ENCODE measurements at regions of chr13 and their contacts with region 1.

Region 1: DNA sequence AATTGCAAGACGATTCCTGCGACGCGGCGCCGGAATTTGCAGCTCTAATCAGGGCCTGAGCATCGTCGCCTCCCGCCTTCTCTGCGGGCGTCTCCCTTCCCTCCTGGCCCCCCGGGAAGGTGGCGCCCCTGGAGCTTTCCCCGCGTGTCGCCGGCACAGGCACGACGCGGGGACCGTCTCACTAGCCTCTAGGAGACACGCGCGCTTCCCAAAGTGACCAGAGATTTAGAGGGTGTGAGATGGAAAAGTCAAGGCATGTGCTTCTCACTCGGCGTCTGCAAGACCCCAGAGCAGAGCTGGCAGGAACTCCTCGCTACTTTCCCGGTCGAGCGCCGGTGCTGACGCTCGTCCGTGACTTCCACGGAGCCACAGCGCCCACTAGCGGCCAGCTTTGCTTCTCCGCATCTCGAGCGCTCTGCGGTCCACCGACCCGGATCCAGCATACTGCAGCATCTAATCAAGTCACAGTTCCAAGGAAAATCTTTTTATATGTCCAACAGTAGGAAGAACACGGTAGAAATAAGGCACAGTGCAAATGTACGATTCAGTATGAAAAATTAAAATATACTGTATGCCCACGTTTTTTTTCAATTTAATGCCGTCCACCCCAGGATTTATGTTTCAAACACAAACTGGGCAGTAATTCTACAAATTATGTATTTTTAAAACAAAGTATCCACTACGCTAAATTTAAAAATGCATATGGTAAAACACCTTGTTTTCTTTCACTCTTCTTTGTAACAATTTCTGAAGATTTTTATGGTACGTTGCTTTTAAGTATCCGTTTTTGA is 977 bp upstream of the EFNB2 start:
- DNase-seq: peak; percentile 94

Region 2: DNA sequence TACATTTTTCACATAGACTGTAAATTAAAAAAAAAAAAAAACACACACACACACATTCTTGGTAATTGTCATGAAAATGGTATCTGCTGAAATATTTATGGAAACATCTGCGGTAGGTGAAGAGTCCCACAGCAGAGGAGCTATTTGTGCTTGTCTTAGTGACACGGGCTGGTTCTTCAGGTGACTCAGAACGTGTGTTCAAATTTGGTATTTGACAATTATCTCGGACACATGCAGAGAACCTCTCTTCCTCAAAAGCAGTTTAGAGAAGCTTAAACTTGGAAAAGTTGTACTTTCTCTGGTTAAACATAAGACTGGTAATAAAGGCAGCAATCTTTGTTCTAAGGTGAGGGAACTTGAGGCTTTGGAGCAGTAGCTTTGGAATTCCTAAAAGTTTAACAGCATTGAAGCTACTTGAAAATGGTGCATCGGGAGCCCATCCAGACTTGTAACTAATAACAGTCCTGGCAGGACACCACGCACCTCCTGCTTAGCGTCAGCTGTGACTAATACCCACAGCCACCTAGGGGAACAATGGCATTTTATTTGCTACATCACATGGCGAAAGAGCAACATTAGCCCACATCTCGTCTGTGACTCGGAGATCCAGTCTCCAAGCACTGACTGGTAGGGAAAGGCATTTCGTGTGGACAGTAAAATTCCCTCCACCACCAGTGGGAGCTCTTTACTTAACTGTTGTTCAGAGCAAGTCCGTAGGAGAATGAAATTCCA is 1965.1 kb before region 1 on chr13:
- intact Hi-C with region 1: loop called (anchors 5 kb)
- DNase-seq: no peak

Region 3: GRCh38 chr13:104785952-104786351 is 1750.5 kb before region 1 on chr13:
- intact Hi-C with region 1: loop called (anchors 10 kb)
- DNase-seq: no peak

Region 4: GRCh38 chr13:106083620-106084350 is 452.7 kb before region 1 on chr13:
- intact Hi-C with region 1: loop called (anchors 5 kb)
- DNase-seq: no peak

Region 5: GRCh38 chr13:106337096-106337850 is 199.2 kb before region 1 on chr13:
- intact Hi-C with region 1: no loop called
- DNase-seq: no peak

Region 6: DNA sequence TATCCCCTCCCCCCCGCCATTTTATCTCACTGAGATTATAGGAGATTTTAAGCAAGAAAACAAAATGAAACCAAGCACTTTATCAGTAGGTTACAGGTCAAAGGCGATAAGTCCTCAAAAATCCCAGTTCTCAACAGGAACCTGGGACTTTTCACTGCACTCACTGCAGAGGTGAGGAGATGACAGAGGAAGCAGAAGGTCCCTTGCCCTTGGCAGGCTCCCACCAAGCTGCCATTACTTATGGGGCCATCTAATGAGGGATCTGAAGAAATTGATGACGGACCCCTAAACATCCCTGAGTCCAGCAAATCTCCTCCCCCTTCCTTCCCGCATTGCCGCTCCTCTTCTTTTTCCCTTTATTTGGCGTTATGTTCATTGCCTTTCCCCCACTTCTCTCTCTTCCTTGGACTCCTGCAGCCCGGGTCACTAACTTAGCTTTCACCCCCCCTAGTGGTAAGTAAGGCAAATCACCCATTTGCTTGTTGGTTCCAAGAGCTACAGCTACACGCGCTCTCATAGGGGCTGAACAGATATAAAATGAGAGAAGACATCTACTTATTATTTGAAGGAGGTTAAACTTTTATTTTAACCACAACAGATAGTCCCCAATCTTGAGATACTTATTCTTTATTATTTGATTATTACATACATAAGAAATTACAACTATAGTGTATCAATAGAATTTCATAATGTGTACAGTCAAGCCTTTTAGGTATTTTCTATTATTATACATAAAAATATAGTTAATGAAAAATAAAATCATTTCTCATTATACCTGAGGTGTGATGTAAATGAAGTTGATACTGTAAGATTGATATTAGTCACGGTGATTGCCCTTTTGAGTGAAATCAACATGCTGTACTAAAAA is 83.5 kb after region 1 on chr13:
- intact Hi-C with region 1: loop called (anchors 5 kb)
- DNase-seq: no peak

Region 7: DNA sequence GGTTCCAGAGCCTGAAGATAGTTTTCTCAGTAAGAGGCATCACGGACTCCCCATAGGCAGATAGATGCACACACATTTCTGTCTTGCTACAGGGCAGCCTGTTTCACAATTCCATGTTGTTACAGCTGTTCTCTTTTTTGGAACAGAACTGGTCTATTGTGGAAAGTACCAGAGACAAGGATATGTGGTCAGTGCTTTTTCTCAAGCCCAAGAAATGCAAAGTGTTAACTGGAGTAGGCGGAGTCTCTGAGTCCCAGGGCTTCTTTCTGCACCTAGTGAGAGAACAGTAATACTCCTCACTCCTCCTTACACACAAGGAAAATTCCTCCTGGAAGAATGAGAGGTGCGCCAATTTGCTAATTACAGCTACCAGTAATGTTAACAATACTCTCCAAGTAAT is 173.1 kb after region 1 on chr13:
- intact Hi-C with region 1: loop called (anchors 10 kb)
- DNase-seq: no peak

Measured in cardiac septum (tissue), 1 donor.